Activated CD4-positive, alpha-beta T cell treated with anti-CD3 and anti-CD28 coated beads for 36 hours (primary cell): ENCODE measurements at regions of chr1 and their contacts with region 1.

Region 1: DNA sequence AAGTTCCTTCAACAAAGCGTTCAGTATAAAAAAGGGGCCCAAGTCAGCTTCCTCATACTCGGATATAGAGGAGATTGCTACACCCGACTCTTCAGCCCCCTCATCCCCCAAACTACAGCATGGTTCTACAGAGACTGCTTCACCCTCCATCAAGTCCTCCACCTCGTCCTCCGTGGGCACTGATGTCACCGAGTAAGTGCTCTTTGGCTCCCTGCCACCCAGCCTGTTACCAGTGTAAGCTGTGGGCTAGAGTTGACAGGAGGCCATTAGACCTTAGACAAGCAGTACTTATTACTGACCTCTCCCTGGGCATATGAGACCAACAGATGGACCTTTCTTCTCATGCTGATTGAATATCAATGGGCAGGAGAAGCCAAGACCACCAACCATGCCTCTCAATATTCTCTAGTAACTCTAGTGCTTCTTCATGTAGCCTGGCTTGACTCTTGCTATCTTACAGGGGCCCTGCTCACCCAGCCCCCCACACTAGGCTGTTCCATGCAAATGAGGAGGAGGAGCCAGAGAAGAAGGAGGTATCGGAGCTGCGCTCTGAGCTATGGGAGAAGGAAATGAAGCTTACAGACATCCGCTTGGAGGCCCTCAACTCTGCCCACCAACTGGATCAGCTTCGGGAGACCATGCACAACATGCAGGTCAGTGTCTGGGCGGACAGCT is 20.9 kb upstream of the IPO9 start:
- DNase-seq: no peak
- ATAC-seq: no peak
- H3K4me3 Mint-ChIP-seq: no peak overlapping the region
- H3K27ac Mint-ChIP-seq: no peak overlapping the region
- H3K4me1 Mint-ChIP-seq: no peaks in the 10 kb centered on the region
- H3K27me3 Mint-ChIP-seq: no peaks in the 10 kb centered on the region

Region 2: DNA sequence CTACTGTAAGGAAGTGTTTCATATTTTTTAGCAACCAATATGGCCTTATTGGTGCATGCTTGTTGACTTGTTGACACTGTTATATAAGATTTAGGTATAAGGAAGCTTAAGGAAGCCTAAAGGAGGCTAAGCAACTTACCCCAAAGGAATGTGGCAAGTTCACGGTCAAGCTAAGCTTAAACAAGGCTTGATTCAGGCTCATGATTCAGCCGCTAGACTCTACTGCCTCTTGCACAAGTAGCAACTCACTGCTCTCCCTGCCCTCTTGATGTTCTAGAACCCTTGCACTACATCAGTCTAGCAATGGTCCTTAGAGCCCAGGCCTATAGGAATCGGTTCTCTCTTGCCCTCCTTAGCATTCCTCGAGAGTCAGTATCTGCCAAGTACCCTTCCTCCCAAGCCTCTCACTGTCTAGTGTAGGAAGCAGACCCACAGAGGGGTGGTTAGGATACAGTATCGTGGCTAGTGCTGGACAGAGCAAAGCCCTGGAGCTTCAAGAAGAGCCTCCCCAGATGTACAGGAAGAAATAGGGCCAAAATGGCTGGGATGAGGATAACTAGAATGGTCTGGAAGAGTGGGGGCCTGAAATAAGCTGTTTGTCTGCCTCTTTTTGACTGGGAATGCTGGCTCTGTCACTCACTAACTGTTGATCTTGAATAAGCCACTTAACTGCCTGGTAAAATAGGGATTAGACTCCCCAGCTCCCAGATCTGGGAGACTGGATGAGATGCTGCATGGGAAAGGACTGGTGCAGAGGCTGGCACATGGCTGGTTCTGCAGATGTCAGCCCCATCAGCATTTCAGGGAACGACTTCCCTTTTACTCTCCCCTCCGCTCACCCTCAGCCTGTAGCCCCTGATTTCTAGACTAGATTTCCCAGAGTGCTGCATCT is 146.9 kb before region 1 on chr1:
- CTCF ChIA-PET with region 1: no interaction called
- POLR2A ChIA-PET with region 1: no interaction called
- intact Hi-C with region 1: no loop called
- DNase-seq: no peak
- ATAC-seq: no peak
- H3K4me3 Mint-ChIP-seq: no peak overlapping the region
- H3K27ac Mint-ChIP-seq: no peak overlapping the region
- H3K4me1 Mint-ChIP-seq: no peaks in the 10 kb centered on the region
- H3K27me3 Mint-ChIP-seq: peaks cover 2% of the 10 kb centered on the region

Region 3: GRCh38 chr1:201792534-201793305 is 15.4 kb before region 1 on chr1:
- CTCF ChIA-PET with region 1: interaction called, 24 read pairs
- POLR2A ChIA-PET with region 1: no interaction called
- intact Hi-C with region 1: no loop called
- DNase-seq: peak; percentile 72
- ATAC-seq: peak; percentile 80
- H3K4me3 Mint-ChIP-seq: no peak overlapping the region
- H3K27ac Mint-ChIP-seq: no peak overlapping the region
- H3K4me1 Mint-ChIP-seq: peaks cover 6% of the 10 kb centered on the region
- H3K27me3 Mint-ChIP-seq: no peaks in the 10 kb centered on the region